ENCODE measurements at regions of chr12 and their contacts with region 1.

Region 1: GRCh38 chr12:12992418-12993130 is 7.5 kb downstream of the HEBP1 start:
- DNase-seq: no peak
- H3K4me3 Mint-ChIP-seq: no peak overlapping the region
- H3K27ac Mint-ChIP-seq: no peak overlapping the region
- H3K4me1 Mint-ChIP-seq: peaks cover 20% of the 10 kb centered on the region
- H3K27me3 Mint-ChIP-seq: no peaks in the 10 kb centered on the region

Region 2: DNA sequence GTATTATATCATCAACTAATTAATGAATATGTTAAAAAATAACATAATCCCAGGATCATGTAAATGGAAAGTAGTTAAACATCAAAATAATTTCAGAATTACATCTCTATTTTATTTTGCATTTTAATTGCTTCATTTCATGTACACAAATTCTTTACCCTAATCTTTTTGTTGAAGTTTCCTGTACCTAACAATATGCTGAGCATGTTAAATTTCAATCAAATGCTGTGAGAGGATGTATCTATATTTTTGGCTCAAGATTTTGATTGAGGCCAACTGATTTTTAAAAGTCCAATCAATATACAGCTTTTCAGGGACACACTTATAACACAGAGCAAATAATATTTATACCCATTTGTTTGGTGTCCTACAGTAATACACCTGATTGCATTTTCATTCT is 47.0 kb before region 1 on chr12:
- intact Hi-C with region 1: loop called (anchors 1 kb)
- DNase-seq: no peak
- H3K4me3 Mint-ChIP-seq: no peak overlapping the region
- H3K27ac Mint-ChIP-seq: no peak overlapping the region
- H3K4me1 Mint-ChIP-seq: no peaks in the 10 kb centered on the region
- H3K27me3 Mint-ChIP-seq: peaks cover 10% of the 10 kb centered on the region

Region 3: GRCh38 chr12:13135371-13136178 is 143.0 kb after region 1 on chr12:
- intact Hi-C with region 1: no loop called
- DNase-seq: no peak
- H3K4me3 Mint-ChIP-seq: no peak overlapping the region
- H3K27ac Mint-ChIP-seq: no peak overlapping the region
- H3K4me1 Mint-ChIP-seq: no peaks in the 10 kb centered on the region
- H3K27me3 Mint-ChIP-seq: peaks cover 15% of the 10 kb centered on the region

Region 4: GRCh38 chr12:13275241-13276085 is 282.9 kb after region 1 on chr12:
- intact Hi-C with region 1: no loop called
- DNase-seq: no peak
- H3K4me3 Mint-ChIP-seq: no peak overlapping the region
- H3K27ac Mint-ChIP-seq: no peak overlapping the region
- H3K4me1 Mint-ChIP-seq: no peaks in the 10 kb centered on the region
- H3K27me3 Mint-ChIP-seq: peaks cover 26% of the 10 kb centered on the region